ENCODE measurements at regions of chr16 and their contacts with region 1.

Region 1: DNA sequence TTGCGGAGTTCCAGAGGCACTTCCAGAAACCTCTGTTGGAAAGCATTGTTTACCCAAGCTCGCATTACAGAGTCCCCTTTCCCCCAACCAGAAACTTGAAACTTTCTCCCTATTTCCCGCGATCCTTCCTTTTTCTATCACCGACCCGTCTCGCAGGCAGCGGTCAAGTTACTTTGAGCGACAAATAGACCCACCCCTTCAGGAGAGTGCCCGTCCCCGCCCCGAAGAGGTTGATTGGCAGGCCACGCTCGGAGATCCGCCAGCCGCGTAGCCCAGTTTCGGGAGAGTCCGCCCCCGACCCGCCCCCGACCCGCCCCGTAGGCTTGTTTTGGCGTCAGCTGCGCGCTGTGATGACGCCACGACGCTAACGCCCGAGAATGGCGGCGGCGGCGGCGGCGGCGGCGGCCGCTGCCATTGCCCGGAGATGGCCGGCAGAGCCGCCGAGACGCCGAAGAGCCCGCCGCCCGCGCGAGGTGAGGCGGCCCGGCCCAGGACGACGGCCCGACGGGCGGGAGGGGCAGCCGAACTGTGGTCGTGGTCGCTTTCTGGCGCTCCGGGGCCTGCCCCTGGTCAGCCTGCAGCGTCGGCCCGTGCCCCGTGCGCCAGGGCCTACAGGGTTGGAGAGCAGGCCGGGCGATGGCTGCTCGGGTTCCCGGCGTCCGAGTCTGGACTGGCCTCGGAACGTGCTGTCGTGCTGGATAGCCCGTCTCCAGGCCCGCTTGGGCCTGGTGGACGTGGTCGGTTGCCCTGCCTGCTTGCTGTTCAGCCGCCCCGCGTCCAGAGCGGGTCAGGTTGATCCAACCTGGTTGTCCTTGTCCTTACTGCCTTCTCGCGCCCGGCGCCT is at the start of gene PSKH1:
- DNase-seq: peak; percentile 77 to 92 (median 84)
- ATAC-seq: peak; percentile 99
- H3K4me3 ChIP-seq: peak within 1 kb of the TSS; percentile 89
- H3K4me3 Mint-ChIP-seq: peak within 1 kb of the TSS; percentile 86 to 97 (median 94)
- H3K27ac ChIP-seq: peak within 1 kb of the TSS; percentile 94
- H3K27ac Mint-ChIP-seq: peak within 1 kb of the TSS; percentile 85 to 98 (median 97)
- H3K4me1 ChIP-seq: peaks cover 12 to 15% of the 10 kb centered on the region in 2 donors
- H3K4me1 Mint-ChIP-seq: peaks cover 22 to 48% (median 35%) of the 10 kb centered on the region in 7 donors
- H3K27me3 ChIP-seq: no peaks in the 10 kb centered on the region
- H3K27me3 Mint-ChIP-seq: no peaks in the 10 kb centered on the region
- total RNA-seq, gene PSKH1: 18.0 to 28.5 (median 23.3) TPM

Region 2: DNA sequence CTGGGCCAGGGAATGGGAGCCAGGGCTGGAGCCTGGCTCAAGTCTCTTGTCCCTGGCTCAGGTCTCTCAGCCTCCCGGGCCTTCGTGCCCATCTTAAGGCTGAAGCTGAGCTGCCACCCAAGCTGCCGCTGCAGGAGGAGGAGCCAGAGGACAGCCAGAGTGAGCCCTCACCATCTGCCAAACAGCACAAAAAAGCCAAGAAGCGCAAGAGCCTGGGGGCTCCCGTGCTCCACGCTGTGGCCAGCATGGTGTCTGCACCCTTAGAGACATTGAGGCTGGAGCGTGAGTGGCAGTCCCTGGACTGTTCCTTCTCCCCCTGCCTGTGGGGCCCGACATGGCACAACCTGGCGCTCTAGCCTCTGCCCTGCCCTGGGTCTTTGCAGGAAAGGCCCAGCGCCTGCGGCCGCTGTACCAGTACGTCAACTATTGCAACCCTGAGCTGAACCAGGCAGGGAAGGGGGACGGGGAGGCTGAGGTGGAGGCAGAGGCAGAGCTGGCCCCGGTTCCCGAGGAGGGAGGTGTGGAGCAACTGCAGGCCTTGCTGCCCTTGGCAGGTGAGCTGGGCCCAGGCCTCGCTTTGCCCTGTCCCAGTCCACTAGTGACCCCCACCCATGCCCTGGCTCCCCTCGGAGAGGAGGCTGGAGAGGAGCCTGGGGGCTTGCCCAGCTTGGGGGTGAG is 225.2 kb before region 1 on chr16:
- CTCF ChIA-PET with region 1: no interaction called
- POLR2A ChIA-PET with region 1: no interaction called
- intact Hi-C with region 1: loop called in 1 of 2 experiments (anchors 10 kb)
- DNase-seq: peak; percentile 61 to 88 (median 82)
- ATAC-seq: peak; percentile 93
- H3K4me3 ChIP-seq: peak overlapping the region; percentile 56
- H3K4me3 Mint-ChIP-seq: peak overlapping the region; percentile 42 to 96 (median 82)
- H3K27ac ChIP-seq: peak overlapping the region; percentile 73
- H3K27ac Mint-ChIP-seq: peak overlapping the region in 6 of 9 donors; percentile 31 to 67 (median 58)
- H3K4me1 ChIP-seq: peaks cover 9 to 12% of the 10 kb centered on the region in 2 donors
- H3K4me1 Mint-ChIP-seq: peaks cover 10 to 32% (median 17%) of the 10 kb centered on the region in 7 donors
- H3K27me3 ChIP-seq: no peaks in the 10 kb centered on the region
- H3K27me3 Mint-ChIP-seq: no peaks in the 10 kb centered on the region

Region 3: GRCh38 chr16:67741118-67741517 is 152.0 kb before region 1 on chr16:
- CTCF ChIA-PET with region 1: no interaction called
- POLR2A ChIA-PET with region 1: no interaction called
- intact Hi-C with region 1: no loop called
- DNase-seq: no peak
- ATAC-seq: no peak
- H3K4me3 ChIP-seq: no peak overlapping the region
- H3K4me3 Mint-ChIP-seq: no peak overlapping the region
- H3K27ac ChIP-seq: no peak overlapping the region
- H3K27ac Mint-ChIP-seq: peak overlapping the region in 1 of 9 donors; percentile 46
- H3K4me1 ChIP-seq: no peaks in the 10 kb centered on the region
- H3K4me1 Mint-ChIP-seq: peaks cover 0 to 4% (median 0%) of the 10 kb centered on the region in 7 donors
- H3K27me3 ChIP-seq: no peaks in the 10 kb centered on the region
- H3K27me3 Mint-ChIP-seq: no peaks in the 10 kb centered on the region

Region 4: DNA sequence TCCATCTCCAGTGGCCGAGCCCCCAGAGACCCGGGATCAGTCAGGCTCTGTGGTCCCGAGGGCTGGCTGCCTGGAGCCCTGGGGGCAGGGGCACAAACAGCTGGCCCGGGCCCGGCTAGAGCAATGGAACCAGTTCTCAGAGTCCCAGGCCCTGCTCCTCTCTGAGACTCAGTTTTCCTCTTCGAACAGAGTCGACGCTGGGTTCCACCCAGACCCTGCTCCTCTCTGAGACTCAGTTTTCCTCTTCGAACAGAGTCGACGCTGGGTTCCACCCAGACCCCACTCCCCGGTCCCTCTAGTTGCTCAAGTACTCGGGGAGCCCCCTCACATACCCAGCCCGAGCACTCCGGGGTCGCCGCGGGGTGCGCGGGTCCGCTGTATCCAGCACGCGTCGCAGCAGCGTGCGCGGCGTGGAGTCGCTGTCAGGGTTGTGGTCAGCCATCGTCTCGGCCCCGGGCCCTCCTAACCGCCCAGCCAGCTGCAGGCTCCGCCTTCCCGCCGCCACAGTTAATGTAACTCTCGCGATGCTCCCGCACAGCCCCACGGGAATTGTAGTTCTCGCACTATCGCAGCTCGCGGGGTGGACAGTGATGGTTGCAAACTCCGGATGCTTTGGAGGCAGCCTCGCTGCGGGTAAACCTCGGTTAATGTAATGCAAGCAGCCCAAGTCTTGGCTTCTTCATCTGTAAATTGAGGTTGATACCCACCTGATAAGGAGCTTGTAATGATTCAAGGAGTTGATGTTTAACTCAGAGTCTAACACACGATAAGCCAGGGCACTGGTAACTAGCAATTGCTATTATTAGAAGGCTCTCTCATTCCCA is 59.5 kb before region 1 on chr16:
- CTCF ChIA-PET with region 1: no interaction called
- POLR2A ChIA-PET with region 1: no interaction called
- intact Hi-C with region 1: loop called in 1 of 2 experiments (anchors 1 kb)
- DNase-seq: peak; percentile 83 to 92 (median 89)
- ATAC-seq: peak; percentile 100
- H3K4me3 ChIP-seq: peak overlapping the region; percentile 82
- H3K4me3 Mint-ChIP-seq: peak overlapping the region; percentile 90 to 96 (median 93)
- H3K27ac ChIP-seq: peak overlapping the region; percentile 70
- H3K27ac Mint-ChIP-seq: peak overlapping the region; percentile 73 to 93 (median 82)
- H3K4me1 ChIP-seq: peaks cover 8 to 9% of the 10 kb centered on the region in 2 donors
- H3K4me1 Mint-ChIP-seq: peaks cover 11 to 19% (median 15%) of the 10 kb centered on the region in 7 donors
- H3K27me3 ChIP-seq: no peaks in the 10 kb centered on the region
- H3K27me3 Mint-ChIP-seq: no peaks in the 10 kb centered on the region

Region 5: GRCh38 chr16:67872786-67873537 is 20.2 kb before region 1 on chr16 and contains the start of gene EDC4:
- CTCF ChIA-PET with region 1: no interaction called
- POLR2A ChIA-PET with region 1: interaction called, 12 read pairs
- intact Hi-C with region 1: loop called in 1 of 2 experiments (anchors 1 kb)
- DNase-seq: peak; percentile 75 to 96 (median 83)
- ATAC-seq: peak; percentile 96
- H3K4me3 ChIP-seq: peak within 1 kb of the TSS; percentile 88
- H3K4me3 Mint-ChIP-seq: peak within 1 kb of the TSS; percentile 88 to 96 (median 94)
- H3K27ac ChIP-seq: peak within 1 kb of the TSS; percentile 91
- H3K27ac Mint-ChIP-seq: peak within 1 kb of the TSS; percentile 90 to 97 (median 92)
- H3K4me1 ChIP-seq: peaks cover 19 to 30% of the 10 kb centered on the region in 2 donors
- H3K4me1 Mint-ChIP-seq: peaks cover 25 to 41% (median 36%) of the 10 kb centered on the region in 7 donors
- H3K27me3 ChIP-seq: no peaks in the 10 kb centered on the region
- H3K27me3 Mint-ChIP-seq: no peaks in the 10 kb centered on the region
- total RNA-seq, gene EDC4: 103 to 166 (median 122) TPM

Region 6: DNA sequence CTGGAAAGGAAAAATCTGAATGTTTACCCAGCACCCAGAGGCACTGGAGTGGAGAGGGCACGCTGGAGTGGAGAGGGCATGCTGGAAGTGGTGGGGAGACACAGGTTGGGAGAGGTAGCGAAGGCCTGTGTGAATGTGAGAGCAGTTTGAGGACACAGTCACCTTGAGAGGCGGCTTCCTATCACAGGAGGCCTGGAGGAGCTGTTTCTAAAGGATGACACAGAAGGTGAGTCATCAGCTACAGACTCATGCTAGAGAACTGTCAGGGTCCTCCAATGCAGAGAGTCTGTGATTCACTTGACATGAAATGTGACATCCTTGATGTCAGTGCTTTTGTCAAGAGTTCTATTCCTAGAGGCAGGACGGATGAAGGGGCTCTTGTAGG is 24.7 kb after region 1 on chr16:
- CTCF ChIA-PET with region 1: no interaction called
- POLR2A ChIA-PET with region 1: no interaction called
- intact Hi-C with region 1: no loop called
- DNase-seq: peak in 1 of 9 donors; percentile 44
- ATAC-seq: no peak
- H3K4me3 ChIP-seq: no peak overlapping the region
- H3K4me3 Mint-ChIP-seq: peak overlapping the region in 1 of 10 donors; percentile 27
- H3K27ac ChIP-seq: no peak overlapping the region
- H3K27ac Mint-ChIP-seq: peak overlapping the region in 6 of 9 donors; percentile 28 to 81 (median 70)
- H3K4me1 ChIP-seq: no peaks in the 10 kb centered on the region
- H3K4me1 Mint-ChIP-seq: peaks cover 23 to 50% (median 41%) of the 10 kb centered on the region in 7 donors
- H3K27me3 ChIP-seq: no peaks in the 10 kb centered on the region
- H3K27me3 Mint-ChIP-seq: no peaks in the 10 kb centered on the region

Region 7: DNA sequence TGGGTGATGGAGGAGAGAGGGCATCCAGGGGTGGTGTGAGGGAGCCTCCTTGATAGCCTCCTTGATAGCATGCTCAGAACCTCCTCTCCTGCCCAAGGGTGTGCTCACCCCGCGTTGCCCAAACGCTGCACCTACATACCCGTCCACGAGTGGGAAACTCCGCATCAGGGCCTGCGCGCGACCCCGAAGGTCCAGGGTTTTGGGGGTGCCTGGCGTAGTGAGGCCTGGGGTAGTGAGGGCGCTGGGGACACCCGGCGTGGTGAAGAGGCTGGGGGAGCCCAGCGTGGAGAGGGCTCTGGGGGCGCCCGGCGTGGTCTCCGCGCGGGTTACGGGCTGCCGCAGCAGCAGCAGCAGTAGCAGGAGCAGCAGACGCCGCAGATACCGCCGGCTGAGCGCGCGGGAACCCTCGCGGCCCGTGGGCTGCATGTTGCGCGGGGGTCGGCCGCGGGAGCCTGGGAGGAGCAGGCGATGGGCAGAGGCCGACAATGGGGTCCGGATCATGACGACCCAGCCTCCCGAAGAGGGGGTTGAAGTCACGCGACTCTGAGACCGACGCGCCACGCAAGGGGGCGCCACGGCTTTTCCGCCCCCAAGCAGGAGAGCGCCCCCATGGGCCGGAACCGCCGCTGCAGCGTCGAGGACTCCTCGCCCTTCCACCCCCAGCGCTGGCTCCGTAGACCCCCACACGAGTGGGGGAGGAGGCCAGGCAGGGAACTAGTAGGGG is 87.0 kb after region 1 on chr16 and contains the start of gene DPEP3:
- CTCF ChIA-PET with region 1: interaction called, 3 read pairs
- POLR2A ChIA-PET with region 1: no interaction called
- intact Hi-C with region 1: loop called in 1 of 2 experiments (anchors 5 kb)
- DNase-seq: peak in 1 of 9 donors; percentile 15
- ATAC-seq: peak; percentile 35
- H3K4me3 ChIP-seq: no peak within 1 kb of the TSS
- H3K4me3 Mint-ChIP-seq: no peak within 1 kb of the TSS
- H3K27ac ChIP-seq: no peak within 1 kb of the TSS
- H3K27ac Mint-ChIP-seq: no peak within 1 kb of the TSS
- H3K4me1 ChIP-seq: peaks cover 9 to 23% of the 10 kb centered on the region in 2 donors
- H3K4me1 Mint-ChIP-seq: peaks cover 18 to 31% (median 26%) of the 10 kb centered on the region in 7 donors
- H3K27me3 ChIP-seq: no peaks in the 10 kb centered on the region
- H3K27me3 Mint-ChIP-seq: peaks cover 0 to 6% (median 0%) of the 10 kb centered on the region in 5 donors
- total RNA-seq, gene DPEP3: 0.10 to 2.3 (median 1.6) TPM

Measured in naive thymus-derived CD4-positive, alpha-beta T cell (primary cell).